Heart left ventricle (tissue), 16 donors: ENCODE measurements at regions of chr20 and their contacts with region 1.

Region 1: DNA sequence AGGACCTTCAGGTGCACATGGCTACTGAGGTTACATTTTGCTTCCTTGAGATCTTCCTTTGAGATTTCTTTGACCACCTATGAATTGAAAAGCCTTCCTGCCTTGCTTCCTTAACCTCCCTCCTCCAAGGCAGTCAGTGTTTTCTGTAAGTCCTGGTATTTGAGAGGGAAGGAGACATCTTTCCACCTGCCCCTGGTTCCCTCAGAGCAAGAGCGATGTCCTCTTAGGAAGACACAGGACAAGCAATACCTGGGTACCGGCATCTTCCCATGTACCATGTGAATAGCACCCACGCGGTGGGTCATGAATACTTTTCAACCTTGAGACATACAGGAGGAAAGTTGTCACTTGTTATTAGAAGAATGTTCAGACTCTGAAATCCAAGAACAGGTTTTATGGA is 37.1 kb downstream of the GINS1 start:
- DNase-seq: no peak
- ATAC-seq: no peak
- H3K4me3 ChIP-seq: no peak overlapping the region
- H3K27ac ChIP-seq: no peak overlapping the region
- H3K4me1 ChIP-seq: no peaks in the 10 kb centered on the region
- H3K27me3 ChIP-seq: no peaks in the 10 kb centered on the region
- CTCF ChIP-seq: no peak
- POLR2A ChIP-seq: no peak

Region 2: GRCh38 chr20:25508078-25508770 is 63.7 kb after region 1 on chr20:
- intact Hi-C with region 1: loop called in 1 of 10 experiments (anchors 10 kb)
- DNase-seq: no peak
- ATAC-seq: no peak
- H3K4me3 ChIP-seq: no peak overlapping the region
- H3K27ac ChIP-seq: no peak overlapping the region
- H3K4me1 ChIP-seq: no peaks in the 10 kb centered on the region
- H3K27me3 ChIP-seq: no peaks in the 10 kb centered on the region
- CTCF ChIP-seq: no peak
- POLR2A ChIP-seq: no peak